ENCODE measurements at regions of chr17 and their contacts with region 1.

Region 1: DNA sequence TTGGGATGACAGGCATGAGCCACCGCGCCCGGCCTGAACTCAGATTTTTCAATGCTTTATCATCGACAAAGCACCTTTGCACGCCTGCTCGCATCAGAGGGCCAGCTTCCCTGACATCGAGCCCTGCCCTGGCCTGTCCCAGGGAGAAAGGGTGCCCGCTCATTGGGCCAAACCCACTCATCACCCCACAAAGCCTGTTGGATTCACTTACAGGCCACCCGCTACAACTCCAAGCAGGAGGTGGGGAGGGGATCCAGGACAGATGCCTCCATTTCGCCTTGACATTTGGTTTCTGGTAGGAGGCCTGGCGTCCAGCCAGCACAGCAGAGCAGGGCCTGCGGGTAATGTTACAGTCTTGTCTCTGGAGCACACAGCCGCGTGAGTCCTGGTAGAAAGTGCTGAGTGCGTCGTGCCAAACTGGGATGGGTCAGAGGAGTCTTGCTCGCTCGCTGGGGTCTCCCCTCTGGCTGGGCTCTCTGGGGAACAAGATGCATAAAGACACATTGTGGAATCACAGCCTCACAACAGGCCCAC is 19.8 kb downstream of the SMTNL2 start:
- DNase-seq: peak; percentile 72 to 84
- ATAC-seq: peak in 7 of 8 donors; percentile 8 to 39 (median 32)
- H3K4me3 ChIP-seq: no peak overlapping the region
- H3K27ac ChIP-seq: peak overlapping the region; percentile 15 to 75 (median 62)
- H3K4me1 ChIP-seq: peaks cover 9 to 76% (median 51%) of the 10 kb centered on the region in 9 donors
- H3K27me3 ChIP-seq: no peaks in the 10 kb centered on the region
- CTCF ChIP-seq: no peak

Region 2: GRCh38 chr17:4565209-4566141 is 38.7 kb before region 1 on chr17:
- intact Hi-C with region 1: loop called in 1 of 10 experiments (anchors 5 kb)
- DNase-seq: peak in 1 of 2 donors; percentile 68
- ATAC-seq: peak; percentile 64 to 93 (median 84)
- H3K4me3 ChIP-seq: no peak overlapping the region
- H3K27ac ChIP-seq: peak overlapping the region in 3 of 10 donors; percentile 19 to 43 (median 32)
- H3K4me1 ChIP-seq: peaks cover 0 to 32% (median 15%) of the 10 kb centered on the region in 9 donors
- H3K27me3 ChIP-seq: no peaks in the 10 kb centered on the region
- CTCF ChIP-seq: peak; percentile 75 to 87 (median 81)

Region 3: GRCh38 chr17:4583782-4584100 is 20.4 kb before region 1 on chr17:
- intact Hi-C with region 1: loop called in 1 of 10 experiments (anchors 1 kb)
- DNase-seq: peak in 1 of 2 donors; percentile 47
- ATAC-seq: peak; percentile 60 to 74 (median 70)
- H3K4me3 ChIP-seq: peak overlapping the region; percentile 7 to 70 (median 60)
- H3K27ac ChIP-seq: peak overlapping the region; percentile 34 to 88 (median 78)
- H3K4me1 ChIP-seq: peaks cover 13 to 56% (median 35%) of the 10 kb centered on the region in 9 donors
- H3K27me3 ChIP-seq: peaks cover 0 to 48% (median 23%) of the 10 kb centered on the region in 7 donors
- CTCF ChIP-seq: peak; percentile 11 to 55 (median 46)

Region 4: DNA sequence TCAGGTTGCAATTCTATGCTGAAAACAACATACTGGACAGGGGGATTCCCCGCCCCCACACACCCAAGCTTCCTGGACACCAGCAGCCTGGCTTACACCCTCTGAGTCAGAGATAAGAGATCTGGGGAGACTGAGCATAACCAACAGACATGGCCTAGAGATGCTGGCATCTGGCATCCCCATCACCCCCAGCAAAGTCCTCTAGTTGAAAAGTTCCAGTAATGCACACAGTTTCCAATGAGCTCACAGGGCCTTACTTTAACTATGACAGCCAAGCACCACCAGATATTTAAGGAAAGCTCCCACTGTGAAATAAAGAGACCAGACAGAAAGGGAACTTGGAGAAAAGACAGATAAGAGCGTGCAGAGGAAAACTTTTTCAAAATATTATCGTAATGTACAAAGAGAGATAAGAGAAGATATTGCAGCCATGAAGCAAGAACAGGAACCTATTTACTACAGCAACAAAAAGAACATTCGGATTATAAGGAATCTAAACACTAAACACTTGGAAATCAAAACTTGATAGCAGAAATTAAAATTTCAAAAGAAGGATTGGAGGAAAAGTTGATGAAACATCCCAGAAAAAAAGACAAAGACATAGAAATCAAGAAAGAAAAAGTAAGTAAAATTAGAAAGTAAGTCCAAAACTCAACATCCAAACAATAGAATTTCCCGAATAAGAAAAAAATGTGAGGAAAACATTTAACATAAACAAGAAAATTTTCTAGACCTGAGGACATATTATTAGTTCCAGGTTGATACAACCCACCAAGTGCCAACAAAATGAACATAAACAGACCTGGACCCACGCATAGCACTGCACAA is 54.5 kb after region 1 on chr17:
- intact Hi-C with region 1: no loop called
- DNase-seq: no peak
- ATAC-seq: no peak
- H3K4me3 ChIP-seq: no peak overlapping the region
- H3K27ac ChIP-seq: no peak overlapping the region
- H3K4me1 ChIP-seq: peaks cover 0 to 6% (median 0%) of the 10 kb centered on the region in 9 donors
- H3K27me3 ChIP-seq: peaks cover 0 to 49% (median 4%) of the 10 kb centered on the region in 7 donors
- CTCF ChIP-seq: no peak